ENCODE measurements at regions of chr2 and their contacts with region 1.

Region 1: DNA sequence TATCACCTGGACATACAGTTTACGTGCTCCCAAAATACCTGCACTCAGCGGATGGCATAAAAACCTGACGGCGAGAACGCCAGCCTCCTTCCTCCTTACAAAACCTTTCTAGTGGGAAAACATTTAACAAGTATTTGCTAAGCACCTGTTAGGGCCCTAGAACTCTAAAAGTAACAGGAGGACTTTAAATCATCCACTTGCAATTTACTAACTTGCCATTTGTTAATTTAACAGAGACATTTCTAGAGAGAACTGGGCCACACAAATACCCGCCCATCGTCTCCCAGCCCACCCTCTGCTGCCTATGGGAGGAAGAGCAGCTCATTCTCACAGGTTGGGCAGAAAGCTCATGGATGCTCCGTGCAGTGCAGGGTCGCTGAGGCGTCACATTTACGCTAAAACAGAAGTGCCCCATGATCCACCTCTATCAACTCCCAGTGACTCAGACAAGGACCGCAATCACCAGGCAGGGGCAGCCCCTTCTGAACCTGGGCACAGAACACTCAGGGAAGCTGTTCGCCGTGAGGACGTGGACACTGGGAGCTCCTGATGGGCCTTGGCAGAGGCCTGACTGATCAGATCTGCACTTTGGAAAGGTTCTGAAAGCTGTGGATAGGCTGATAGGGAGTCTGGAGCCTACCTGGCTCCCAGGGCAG is 106.9 kb downstream of the HDAC4 start:
- DNase-seq: no peak
- H3K4me3 ChIP-seq: no peak overlapping the region
- H3K27ac ChIP-seq: no peak overlapping the region
- H3K4me1 ChIP-seq: peaks cover 0 to 23% of the 10 kb centered on the region in 2 donors
- H3K27me3 ChIP-seq: no peaks in the 10 kb centered on the region
- CTCF ChIP-seq: no peak

Region 2: GRCh38 chr2:239143858-239144718 is 149.8 kb before region 1 on chr2:
- intact Hi-C with region 1: loop called (anchors 5 kb)
- DNase-seq: no peak
- H3K4me3 ChIP-seq: no peak overlapping the region
- H3K27ac ChIP-seq: no peak overlapping the region
- H3K4me1 ChIP-seq: peaks cover 0 to 3% of the 10 kb centered on the region in 2 donors
- H3K27me3 ChIP-seq: no peaks in the 10 kb centered on the region
- CTCF ChIP-seq: peak; percentile 53 to 58 (median 54)

Region 3: GRCh38 chr2:239267288-239267951 is 26.5 kb before region 1 on chr2:
- intact Hi-C with region 1: loop called (anchors 2 kb)
- DNase-seq: peak; percentile 70 to 89
- H3K4me3 ChIP-seq: peak overlapping the region in 1 of 2 donors; percentile 14
- H3K27ac ChIP-seq: peak overlapping the region; percentile 81 to 87
- H3K4me1 ChIP-seq: peaks cover 23 to 47% of the 10 kb centered on the region in 2 donors
- H3K27me3 ChIP-seq: no peaks in the 10 kb centered on the region
- CTCF ChIP-seq: peak in 2 of 3 experiments; percentile 38 to 53

Measured in ascending aorta (tissue), 2 donors.